Right cardiac atrium (tissue), 5 donors: ENCODE measurements at regions of chr15 and their contacts with region 1.

Region 1: GRCh38 chr15:81274931-81275707 is 48.8 kb downstream of the STARD5 start:
- DNase-seq: peak; percentile 72 to 86 (median 77)
- ATAC-seq: peak; percentile 87 to 88
- H3K4me3 ChIP-seq: no peak overlapping the region
- H3K27ac ChIP-seq: peak overlapping the region; percentile 22
- H3K4me1 ChIP-seq: no peaks in the 10 kb centered on the region
- H3K27me3 ChIP-seq: no peaks in the 10 kb centered on the region

Region 2: GRCh38 chr15:81400640-81401236 is 125.6 kb after region 1 on chr15:
- intact Hi-C with region 1: loop called in 3 of 4 experiments (anchors 2 to 5 kb)
- DNase-seq: no peak
- ATAC-seq: no peak
- H3K4me3 ChIP-seq: no peak overlapping the region
- H3K27ac ChIP-seq: no peak overlapping the region
- H3K4me1 ChIP-seq: no peaks in the 10 kb centered on the region
- H3K27me3 ChIP-seq: no peaks in the 10 kb centered on the region